ENCODE measurements at regions of chr2 and their contacts with region 1.

Region 1: DNA sequence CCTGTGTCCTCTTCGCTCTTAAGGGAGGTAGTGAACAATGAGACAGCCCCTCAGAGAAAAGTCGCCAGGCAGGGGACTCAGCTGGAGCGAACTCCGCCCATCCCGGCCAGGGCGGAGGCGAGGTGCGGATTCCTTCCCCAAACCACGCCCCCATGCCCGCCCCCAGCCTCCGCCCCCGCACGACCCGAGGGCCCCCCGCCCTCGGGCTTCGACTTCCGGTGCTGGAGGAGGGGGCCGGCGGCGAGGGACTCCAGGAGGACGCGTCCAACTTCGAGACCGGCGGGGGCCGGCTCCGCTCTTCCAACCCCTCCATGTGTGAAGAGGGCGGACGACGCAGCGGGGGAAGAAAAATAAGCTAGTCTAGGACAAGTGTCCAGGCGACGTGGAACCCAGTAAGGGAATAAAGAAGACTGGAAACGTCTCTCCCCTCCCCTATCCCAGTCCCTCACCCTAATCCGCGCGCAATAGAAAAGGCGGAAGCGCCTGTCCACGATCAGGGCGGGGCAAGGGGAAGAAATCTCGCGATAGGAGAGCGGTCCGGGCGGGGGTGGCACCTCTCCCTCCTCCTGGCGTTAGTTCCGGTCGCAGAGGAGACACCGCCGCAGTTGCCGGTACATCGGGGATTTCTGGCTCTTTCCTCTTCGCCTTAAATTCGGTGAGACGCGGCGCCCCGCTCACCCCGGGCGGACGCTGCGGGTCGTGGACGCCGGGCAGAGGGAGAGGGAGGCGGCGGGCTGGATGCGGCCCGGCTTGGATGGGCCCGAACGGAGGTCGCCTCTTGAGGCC is at the start of gene BZW1:
- DNase-seq: peak; percentile 96
- H3K4me3 Mint-ChIP-seq: peak within 1 kb of the TSS; percentile 100
- H3K27ac Mint-ChIP-seq: peak within 1 kb of the TSS; percentile 99
- H3K4me1 Mint-ChIP-seq: peaks cover 58% of the 10 kb centered on the region
- H3K27me3 Mint-ChIP-seq: no peaks in the 10 kb centered on the region
- total RNA-seq, gene BZW1: 446 and 447 TPM in 2 replicates

Region 2: DNA sequence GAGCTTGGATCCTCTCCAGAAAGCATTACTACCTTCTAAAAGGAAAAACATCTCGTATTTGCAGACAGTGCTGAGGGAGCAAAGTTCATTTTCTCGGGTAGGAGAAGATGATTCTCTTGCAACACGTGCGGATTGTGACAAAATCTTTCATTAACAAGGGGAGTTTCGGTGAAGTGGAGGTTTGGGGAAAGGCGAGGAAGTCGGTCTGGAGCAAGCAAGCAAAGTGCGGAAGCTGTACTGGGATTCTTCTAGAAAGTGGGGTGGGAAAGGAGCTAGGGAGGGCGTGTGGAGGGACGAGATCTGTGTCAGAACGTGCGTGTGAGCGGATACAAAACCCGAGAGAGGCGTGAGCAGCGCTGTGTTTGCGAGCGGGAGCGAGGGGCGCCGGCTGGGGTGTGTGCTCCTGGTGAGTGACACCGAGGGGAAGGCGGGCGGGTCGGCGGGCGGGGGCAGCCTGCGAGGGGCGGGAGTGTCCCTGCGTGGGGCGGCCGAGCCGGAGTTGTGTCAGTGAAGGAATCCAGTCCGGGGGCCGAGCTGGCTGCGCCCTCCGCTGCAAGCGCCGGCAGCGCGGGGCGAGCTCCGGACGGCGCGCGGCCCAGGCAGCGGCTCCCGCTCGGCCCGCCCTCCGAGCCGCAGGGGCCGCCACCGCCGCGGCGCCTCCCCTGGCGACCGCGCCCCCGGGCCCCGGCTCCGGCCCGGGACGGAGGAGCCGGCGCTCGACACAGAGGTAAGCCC is 505.2 kb before region 1 on chr2 and contains the start of gene SPATS2L:
- intact Hi-C with region 1: loop called (anchors 5 kb)
- DNase-seq: peak; percentile 44
- H3K4me3 Mint-ChIP-seq: peak within 1 kb of the TSS; percentile 90
- H3K27ac Mint-ChIP-seq: peak within 1 kb of the TSS; percentile 85
- H3K4me1 Mint-ChIP-seq: peaks cover 35% of the 10 kb centered on the region
- H3K27me3 Mint-ChIP-seq: peaks cover 10% of the 10 kb centered on the region
- total RNA-seq, gene SPATS2L: 35.1 and 38.0 TPM in 2 replicates

Region 3: GRCh38 chr2:200319548-200320337 is 491.8 kb before region 1 on chr2:
- intact Hi-C with region 1: no loop called
- DNase-seq: no peak
- H3K4me3 Mint-ChIP-seq: no peak overlapping the region
- H3K27ac Mint-ChIP-seq: no peak overlapping the region
- H3K4me1 Mint-ChIP-seq: peaks cover 28% of the 10 kb centered on the region
- H3K27me3 Mint-ChIP-seq: peaks cover 2% of the 10 kb centered on the region

Region 4: GRCh38 chr2:200329798-200330197 is 481.7 kb before region 1 on chr2:
- intact Hi-C with region 1: no loop called
- DNase-seq: no peak
- H3K4me3 Mint-ChIP-seq: no peak overlapping the region
- H3K27ac Mint-ChIP-seq: no peak overlapping the region
- H3K4me1 Mint-ChIP-seq: no peaks in the 10 kb centered on the region
- H3K27me3 Mint-ChIP-seq: no peaks in the 10 kb centered on the region

Region 5: DNA sequence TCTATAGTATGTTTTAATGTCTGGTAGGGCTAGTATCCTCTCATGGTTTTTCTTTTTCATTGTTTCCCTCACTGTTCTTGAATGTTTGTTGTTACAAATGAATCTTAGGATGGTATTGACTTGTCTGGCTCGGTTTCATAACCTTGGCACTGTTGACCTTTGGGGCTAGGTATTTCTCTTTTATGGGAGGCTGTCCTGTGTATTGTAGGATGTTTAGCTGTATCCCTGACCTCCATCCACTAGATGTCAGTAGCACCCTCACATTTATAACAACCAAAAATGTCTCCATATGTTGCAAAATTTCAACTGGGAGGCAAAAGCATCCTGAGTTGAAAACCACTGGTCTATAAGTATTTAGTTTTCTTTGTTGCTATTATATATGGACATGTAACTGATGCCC is 232.8 kb before region 1 on chr2:
- intact Hi-C with region 1: loop called (anchors 2 kb)
- DNase-seq: no peak
- H3K4me3 Mint-ChIP-seq: no peak overlapping the region
- H3K27ac Mint-ChIP-seq: no peak overlapping the region
- H3K4me1 Mint-ChIP-seq: peaks cover 18% of the 10 kb centered on the region
- H3K27me3 Mint-ChIP-seq: no peaks in the 10 kb centered on the region

Region 6: DNA sequence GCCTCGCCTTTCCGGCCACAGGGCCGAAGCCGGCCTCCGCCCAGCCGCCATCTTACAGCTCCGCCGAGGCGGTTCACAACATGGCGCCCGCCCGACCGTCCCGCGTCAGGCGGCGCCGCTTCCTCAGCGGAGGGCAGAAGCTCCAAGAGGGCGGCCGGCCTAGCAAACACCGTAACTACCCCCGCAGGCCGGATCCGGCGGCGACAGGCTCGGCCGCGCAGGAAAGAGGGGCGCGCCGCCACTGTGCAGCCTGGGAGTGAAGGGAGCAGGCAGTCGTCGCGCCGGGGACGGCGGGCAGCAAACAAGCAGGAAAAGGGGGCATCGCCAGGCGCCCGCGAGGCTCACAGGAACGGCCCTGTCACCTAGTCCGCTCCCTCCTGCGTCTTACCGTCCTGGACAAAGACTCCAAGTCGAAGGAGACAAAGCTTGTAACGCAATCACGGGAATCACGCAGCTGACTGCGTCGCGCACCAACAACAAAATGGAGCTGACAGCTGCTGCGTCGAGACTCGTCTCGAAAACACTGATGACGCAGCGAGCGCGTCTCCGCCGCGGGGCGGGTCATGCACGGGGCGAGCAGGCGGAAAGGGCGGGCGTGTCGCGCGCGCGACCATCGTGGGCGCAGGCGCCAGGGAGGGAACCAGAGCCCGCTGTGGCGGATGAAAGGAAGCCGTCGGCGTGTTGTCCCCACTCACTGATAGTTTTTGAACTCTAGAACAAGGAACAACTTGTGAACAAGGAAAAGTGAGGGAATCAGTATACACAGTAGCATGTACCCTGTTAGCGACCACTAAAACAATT is 52.8 kb after region 1 on chr2 and contains the start of gene CLK1:
- intact Hi-C with region 1: loop called (anchors 1 kb)
- DNase-seq: peak; percentile 92
- H3K4me3 Mint-ChIP-seq: peak within 1 kb of the TSS; percentile 93
- H3K27ac Mint-ChIP-seq: peak within 1 kb of the TSS; percentile 97
- H3K4me1 Mint-ChIP-seq: peaks cover 50% of the 10 kb centered on the region
- H3K27me3 Mint-ChIP-seq: no peaks in the 10 kb centered on the region
- total RNA-seq, gene CLK1: 91.7 and 99.5 TPM in 2 replicates

Region 7: GRCh38 chr2:200878289-200878880 is 66.9 kb after region 1 on chr2:
- intact Hi-C with region 1: no loop called
- DNase-seq: no peak
- H3K4me3 Mint-ChIP-seq: no peak overlapping the region
- H3K27ac Mint-ChIP-seq: no peak overlapping the region
- H3K4me1 Mint-ChIP-seq: peaks cover 18% of the 10 kb centered on the region
- H3K27me3 Mint-ChIP-seq: no peaks in the 10 kb centered on the region

Region 8: DNA sequence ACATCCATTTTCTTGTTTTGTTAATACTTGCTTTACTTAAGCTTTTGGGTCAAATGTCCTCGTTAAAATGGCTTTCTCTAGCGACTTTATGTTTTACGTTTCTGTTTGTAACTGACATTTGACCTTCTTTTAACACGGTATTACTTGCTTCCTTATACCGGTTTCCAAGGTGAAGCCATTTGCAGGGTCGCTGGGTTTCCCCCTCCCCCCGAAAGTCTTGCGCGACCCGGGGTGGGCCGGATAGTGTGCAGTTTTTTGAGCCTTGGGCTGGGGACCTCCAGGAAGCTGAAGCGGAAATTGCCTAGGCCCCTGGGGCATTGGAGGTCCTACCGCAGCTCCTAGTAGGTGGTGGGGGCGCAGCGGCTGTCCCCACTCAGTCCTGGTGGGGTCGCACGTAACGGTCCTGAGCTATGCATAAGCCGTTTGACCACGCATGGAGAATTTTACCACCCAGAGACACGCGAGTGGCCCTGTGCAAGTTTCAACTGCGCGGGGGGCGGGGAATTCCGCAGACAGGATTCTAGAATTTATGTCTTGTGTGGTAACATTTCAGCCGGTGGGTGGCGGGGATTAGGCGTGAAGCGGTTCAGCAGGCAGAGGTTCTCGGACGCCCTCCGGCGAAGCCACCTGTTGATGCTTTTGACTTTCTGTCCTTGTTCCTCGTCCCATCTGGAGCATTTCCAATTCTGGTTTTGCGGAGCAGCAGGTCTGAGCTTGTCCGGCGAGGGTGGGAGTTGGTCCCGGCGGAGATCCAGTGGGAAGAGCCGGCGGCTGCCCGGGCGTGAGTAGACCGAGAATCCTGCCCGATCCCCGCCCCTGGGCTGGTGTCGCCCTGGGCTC is 306.8 kb after region 1 on chr2:
- intact Hi-C with region 1: loop called (anchors 2 kb)
- DNase-seq: peak; percentile 78
- H3K4me3 Mint-ChIP-seq: peak overlapping the region; percentile 94
- H3K27ac Mint-ChIP-seq: peak overlapping the region; percentile 100
- H3K4me1 Mint-ChIP-seq: peaks cover 65% of the 10 kb centered on the region
- H3K27me3 Mint-ChIP-seq: no peaks in the 10 kb centered on the region

Region 9: DNA sequence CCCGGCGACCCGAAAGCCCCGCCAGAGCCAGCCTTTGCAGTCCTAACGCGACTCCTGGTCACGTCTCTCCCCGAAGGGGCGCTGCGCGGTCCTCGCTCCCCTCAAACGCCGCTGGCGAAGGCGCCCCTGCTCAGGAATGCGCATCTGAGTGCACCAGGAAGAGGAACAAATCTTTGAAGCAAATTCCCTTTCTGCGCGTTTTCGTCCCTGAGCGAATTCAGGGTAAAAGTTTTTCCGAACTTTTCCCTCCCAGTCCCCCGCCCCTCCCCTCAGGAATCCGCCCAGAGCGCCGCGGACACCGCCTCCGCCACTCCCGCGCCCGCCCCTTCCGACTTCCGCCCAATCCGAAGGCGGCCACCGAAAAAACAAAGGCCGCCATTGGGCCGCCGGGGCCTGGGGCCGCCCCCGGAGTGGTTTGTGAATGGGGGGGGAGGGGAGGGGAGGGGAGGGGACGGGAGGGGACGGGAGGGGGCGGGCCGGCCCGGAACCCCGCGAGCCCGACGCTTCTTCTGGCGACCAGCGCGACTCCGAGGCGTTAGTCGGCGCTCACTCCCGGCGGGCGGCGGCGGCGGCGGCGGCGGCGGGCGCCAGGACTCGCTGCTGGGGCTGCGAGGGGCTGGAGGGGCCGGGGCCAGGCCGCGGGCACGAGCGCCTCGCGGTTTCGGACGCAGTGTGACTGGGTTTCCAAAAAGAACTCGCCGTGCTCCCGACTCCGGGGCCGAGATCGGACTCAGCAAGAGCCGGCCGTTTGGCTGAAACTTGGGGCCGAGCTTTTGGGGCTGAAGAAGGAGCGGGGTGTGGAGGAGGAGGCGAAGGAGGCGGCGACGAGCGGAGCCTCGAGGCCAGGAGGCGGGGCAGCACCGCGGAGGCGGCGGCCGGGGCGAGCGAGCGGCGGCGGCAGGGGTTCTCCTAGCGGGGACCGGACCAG is 1222.1 kb after region 1 on chr2 and contains the start of gene FZD7:
- intact Hi-C with region 1: loop called (anchors 5 kb)
- DNase-seq: peak; percentile 83
- H3K4me3 Mint-ChIP-seq: peak within 1 kb of the TSS; percentile 89
- H3K27ac Mint-ChIP-seq: peak within 1 kb of the TSS; percentile 63
- H3K4me1 Mint-ChIP-seq: peaks cover 12% of the 10 kb centered on the region
- H3K27me3 Mint-ChIP-seq: peaks cover 44% of the 10 kb centered on the region
- total RNA-seq, gene FZD7: 1.2 and 1.5 TPM in 2 replicates